Transverse colon (tissue), 4 donors: ENCODE measurements at regions of chr17 and their contacts with region 1.

Region 1: GRCh38 chr17:43994272-43995149 is 9.9 kb upstream of the NAGS start:
- DNase-seq: peak; percentile 60
- H3K4me3 ChIP-seq: peak overlapping the region in 1 of 4 donors; percentile 18
- H3K27ac ChIP-seq: no peak overlapping the region
- H3K4me1 ChIP-seq: peaks cover 4 to 8% (median 7%) of the 10 kb centered on the region in 4 donors
- H3K27me3 ChIP-seq: peaks cover 43% of the 10 kb centered on the region
- CTCF ChIP-seq: peak; percentile 88 to 91 (median 90)
- EP300 ChIP-seq: no peak
- POLR2A ChIP-seq: no peak

Region 2: GRCh38 chr17:43878260-43879175 is 116.0 kb before region 1 on chr17:
- in situ Hi-C with region 1: loop called in 1 of 4 experiments (anchors 25 kb)
- intact Hi-C with region 1: no loop called
- DNase-seq: peak; percentile 82
- H3K4me3 ChIP-seq: no peak overlapping the region
- H3K27ac ChIP-seq: peak overlapping the region in 1 of 4 donors; percentile 0
- H3K4me1 ChIP-seq: peaks cover 7 to 24% (median 16%) of the 10 kb centered on the region in 4 donors
- H3K27me3 ChIP-seq: no peaks in the 10 kb centered on the region
- CTCF ChIP-seq: peak; percentile 90 to 97 (median 96)
- EP300 ChIP-seq: no peak
- POLR2A ChIP-seq: no peak

Region 3: GRCh38 chr17:43917348-43918018 is 77.0 kb before region 1 on chr17:
- in situ Hi-C with region 1: no loop called
- intact Hi-C with region 1: no loop called
- DNase-seq: peak; percentile 50
- H3K4me3 ChIP-seq: peak overlapping the region in 3 of 4 donors; percentile 24 to 42 (median 26)
- H3K27ac ChIP-seq: no peak overlapping the region
- H3K4me1 ChIP-seq: peaks cover 0 to 12% (median 5%) of the 10 kb centered on the region in 4 donors
- H3K27me3 ChIP-seq: peaks cover 17% of the 10 kb centered on the region
- CTCF ChIP-seq: peak in 4 of 5 experiments; percentile 53 to 57 (median 54)
- EP300 ChIP-seq: no peak
- POLR2A ChIP-seq: no peak